Gastrocnemius medialis (tissue), 4 donors: ENCODE measurements at regions of chr11 and their contacts with region 1.

Region 1: GRCh38 chr11:95705485-95706124 is 84.0 kb downstream of the FAM76B start:
- DNase-seq: peak; percentile 71 to 75
- ATAC-seq: peak; percentile 95 to 97
- H3K4me3 ChIP-seq: peak overlapping the region in 1 of 4 donors; percentile 12
- H3K27ac ChIP-seq: peak overlapping the region; percentile 29 to 65 (median 48)
- H3K4me1 ChIP-seq: peaks cover 0 to 8% of the 10 kb centered on the region in 2 donors
- H3K27me3 ChIP-seq: no peaks in the 10 kb centered on the region
- CTCF ChIP-seq: peak; percentile 81 to 91 (median 82)
- POLR2A ChIP-seq: no peak

Region 2: GRCh38 chr11:95076416-95076815 is 629.2 kb before region 1 on chr11:
- in situ Hi-C with region 1: loop called in 1 of 4 experiments (anchors 10 kb)
- intact Hi-C with region 1: no loop called
- DNase-seq: no peak
- ATAC-seq: no peak
- H3K4me3 ChIP-seq: no peak overlapping the region
- H3K27ac ChIP-seq: no peak overlapping the region
- H3K4me1 ChIP-seq: peaks cover 18 to 19% of the 10 kb centered on the region in 2 donors
- H3K27me3 ChIP-seq: no peaks in the 10 kb centered on the region
- CTCF ChIP-seq: no peak
- POLR2A ChIP-seq: no peak

Region 3: GRCh38 chr11:95163106-95163505 is 542.5 kb before region 1 on chr11:
- in situ Hi-C with region 1: loop called in 2 of 4 experiments (anchors 10 kb)
- intact Hi-C with region 1: no loop called
- DNase-seq: no peak
- ATAC-seq: no peak
- H3K4me3 ChIP-seq: no peak overlapping the region
- H3K27ac ChIP-seq: no peak overlapping the region
- H3K4me1 ChIP-seq: peaks cover 3 to 6% of the 10 kb centered on the region in 2 donors
- H3K27me3 ChIP-seq: no peaks in the 10 kb centered on the region
- CTCF ChIP-seq: no peak
- POLR2A ChIP-seq: no peak

Region 4: GRCh38 chr11:95231127-95231880 is 474.3 kb before region 1 on chr11 and contains the start of gene SESN3:
- in situ Hi-C with region 1: no loop called
- intact Hi-C with region 1: loop called (anchors 5 kb)
- DNase-seq: peak; percentile 98
- ATAC-seq: peak; percentile 99
- H3K4me3 ChIP-seq: peak within 1 kb of the TSS; percentile 73 to 83 (median 76)
- H3K27ac ChIP-seq: peak within 1 kb of the TSS; percentile 68 to 79 (median 70)
- H3K4me1 ChIP-seq: peaks cover 22 to 25% of the 10 kb centered on the region in 2 donors
- H3K27me3 ChIP-seq: no peaks in the 10 kb centered on the region
- CTCF ChIP-seq: peak in 1 of 5 experiments; percentile 9
- POLR2A ChIP-seq: peak; percentile 37 to 77
- total RNA-seq, gene SESN3: 6.0 to 10.8 (median 7.8) TPM

Region 5: DNA sequence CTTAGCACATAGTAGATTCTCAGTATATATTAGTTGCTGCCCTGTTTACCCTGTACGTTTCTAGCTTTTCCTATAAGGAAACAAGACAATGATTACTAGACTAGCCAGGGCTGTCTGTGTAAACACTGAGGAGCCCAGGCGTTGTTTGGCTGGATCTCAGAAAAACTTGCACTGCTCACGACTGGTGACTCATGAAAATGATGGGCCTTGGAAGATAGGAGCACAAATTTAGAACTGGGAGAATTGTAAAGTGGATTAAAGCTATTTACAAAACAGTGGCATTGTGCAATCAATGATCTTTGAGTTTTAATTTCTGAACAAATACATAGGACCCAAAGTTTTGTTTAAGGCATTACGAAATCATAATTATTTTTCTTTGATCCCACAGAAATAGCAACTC is 192.9 kb before region 1 on chr11:
- in situ Hi-C with region 1: no loop called
- intact Hi-C with region 1: loop called (anchors 5 kb)
- DNase-seq: peak; percentile 25 to 41
- ATAC-seq: peak; percentile 69 to 72
- H3K4me3 ChIP-seq: no peak overlapping the region
- H3K27ac ChIP-seq: peak overlapping the region; percentile 14 to 67 (median 38)
- H3K4me1 ChIP-seq: peaks cover 0 to 7% of the 10 kb centered on the region in 2 donors
- H3K27me3 ChIP-seq: no peaks in the 10 kb centered on the region
- CTCF ChIP-seq: no peak
- POLR2A ChIP-seq: no peak

Region 6: GRCh38 chr11:95715777-95716241 is 10.2 kb after region 1 on chr11:
- in situ Hi-C with region 1: no loop called
- intact Hi-C with region 1: no loop called
- DNase-seq: no peak
- ATAC-seq: no peak
- H3K4me3 ChIP-seq: no peak overlapping the region
- H3K27ac ChIP-seq: no peak overlapping the region
- H3K4me1 ChIP-seq: no peaks in the 10 kb centered on the region
- H3K27me3 ChIP-seq: no peaks in the 10 kb centered on the region
- CTCF ChIP-seq: no peak
- POLR2A ChIP-seq: no peak

Region 7: DNA sequence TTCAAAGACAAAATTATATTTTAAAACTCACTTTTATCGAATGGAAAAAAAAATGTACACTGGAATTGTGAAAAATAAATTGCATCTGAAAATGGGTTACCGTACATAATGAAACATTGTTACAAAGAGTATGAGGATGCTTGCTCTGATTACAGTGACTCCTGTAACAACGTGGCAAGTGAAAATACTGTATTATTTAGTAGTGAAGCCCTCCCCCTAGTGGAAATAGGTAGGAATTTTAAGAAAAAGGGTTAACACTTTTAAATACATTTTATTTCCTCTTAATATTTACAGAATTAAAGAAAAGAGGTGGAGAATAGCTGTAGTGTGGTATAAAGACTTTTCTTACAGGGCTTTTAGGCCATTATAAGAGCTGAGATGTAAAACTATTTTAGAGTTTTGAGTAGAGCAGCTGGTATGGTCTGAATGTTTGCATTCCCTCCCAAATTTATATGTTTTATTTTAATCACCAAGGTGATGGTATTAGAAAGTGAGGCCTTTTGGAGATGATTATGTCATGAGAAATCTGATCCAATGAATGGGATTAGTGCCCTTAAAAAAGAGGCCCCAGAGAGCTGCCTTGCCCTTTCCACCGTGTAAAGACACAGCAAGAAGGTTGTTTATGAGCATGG is 58.8 kb after region 1 on chr11:
- in situ Hi-C with region 1: no loop called
- intact Hi-C with region 1: no loop called
- DNase-seq: no peak
- ATAC-seq: peak in 1 of 2 donors; percentile 58
- H3K4me3 ChIP-seq: no peak overlapping the region
- H3K27ac ChIP-seq: no peak overlapping the region
- H3K4me1 ChIP-seq: no peaks in the 10 kb centered on the region
- H3K27me3 ChIP-seq: no peaks in the 10 kb centered on the region
- CTCF ChIP-seq: peak; percentile 42 to 72 (median 63)
- POLR2A ChIP-seq: no peak